ENCODE measurements at regions of chr10 and their contacts with region 1.

Region 1: DNA sequence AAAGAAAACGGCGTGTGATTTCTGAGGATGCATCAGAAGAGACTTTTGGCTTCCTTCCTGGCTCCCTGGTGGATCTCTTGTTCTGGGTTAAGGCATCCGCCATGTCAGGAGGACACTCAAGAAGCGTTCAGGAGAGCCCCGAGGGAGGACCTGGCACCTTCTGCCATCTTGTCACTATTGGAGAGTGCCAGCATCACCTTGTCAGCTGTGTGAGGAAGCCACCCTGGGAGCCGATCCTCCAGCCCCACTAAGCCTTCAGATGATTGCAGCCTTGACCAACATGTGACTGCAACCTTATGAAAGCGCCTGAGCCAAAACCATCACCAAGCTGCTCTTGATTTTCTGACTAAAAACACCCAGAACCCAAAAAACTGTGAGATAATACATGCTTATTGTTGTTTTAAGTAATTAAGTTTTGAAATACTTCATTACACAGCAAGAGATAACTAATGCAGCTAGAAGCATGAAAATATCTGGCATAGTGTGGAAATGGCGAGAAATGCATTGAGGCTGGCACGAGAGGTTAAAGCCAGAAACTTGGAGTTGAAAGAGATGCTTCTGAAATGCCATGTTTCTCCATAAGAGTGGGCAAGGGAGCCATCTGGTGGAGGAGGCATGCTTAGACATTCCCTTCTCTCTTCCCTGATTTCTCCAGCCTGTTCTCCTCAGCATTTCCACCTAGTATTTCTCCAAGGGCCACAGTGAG is 5.4 kb upstream of the ZFYVE27 start:
- DNase-seq: peak; percentile 63 to 79
- H3K4me3 ChIP-seq: no peak overlapping the region
- H3K4me3 Mint-ChIP-seq: no peak overlapping the region
- H3K27ac Mint-ChIP-seq: no peak overlapping the region
- H3K4me1 ChIP-seq: peaks cover 1% of the 10 kb centered on the region; the same call in 1 of the 2 replicates
- H3K4me1 Mint-ChIP-seq: peaks cover 12% of the 10 kb centered on the region
- H3K27me3 ChIP-seq: no peaks in the 10 kb centered on the region
- H3K27me3 Mint-ChIP-seq: no peaks in the 10 kb centered on the region
- CTCF ChIP-seq: peak; percentile 81 to 88

Region 2: GRCh38 chr10:97676770-97677581 is 54.5 kb before region 1 on chr10:
- CTCF ChIA-PET with region 1: interaction called, 7 read pairs
- POLR2A ChIA-PET with region 1: interaction called, 4 read pairs
- intact Hi-C with region 1: loop called (anchors 1 kb)
- DNase-seq: peak in 1 of 2 experiments; percentile 54
- H3K4me3 ChIP-seq: no peak overlapping the region
- H3K4me3 Mint-ChIP-seq: no peak overlapping the region
- H3K27ac Mint-ChIP-seq: peak overlapping the region; percentile 57
- H3K4me1 ChIP-seq: peaks cover 5% of the 10 kb centered on the region
- H3K4me1 Mint-ChIP-seq: peaks cover 2% of the 10 kb centered on the region
- H3K27me3 ChIP-seq: no peaks in the 10 kb centered on the region
- H3K27me3 Mint-ChIP-seq: no peaks in the 10 kb centered on the region
- CTCF ChIP-seq: peak; percentile 82 to 87

Region 3: DNA sequence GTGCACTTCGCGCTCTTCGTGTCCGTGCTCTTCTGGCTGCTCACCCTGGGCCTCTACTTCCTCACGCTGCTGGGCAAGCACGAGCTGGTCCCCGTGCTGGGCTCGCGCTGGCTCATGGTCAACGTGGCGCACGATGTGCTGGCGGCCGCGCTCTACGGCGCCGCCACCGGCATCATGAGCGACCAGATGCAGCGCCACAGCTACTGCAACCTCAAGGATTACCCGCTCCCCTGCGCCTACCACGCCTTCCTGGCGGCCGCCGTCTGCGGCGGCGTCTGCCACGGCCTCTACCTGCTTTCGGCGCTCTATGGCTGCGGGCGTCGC is 17.5 kb before region 1 on chr10:
- CTCF ChIA-PET with region 1: interaction called, 12 read pairs
- POLR2A ChIA-PET with region 1: interaction called, 16 read pairs
- intact Hi-C with region 1: loop called (anchors 1 kb)
- DNase-seq: peak; percentile 74 to 81
- H3K4me3 ChIP-seq: peak overlapping the region; percentile 89
- H3K4me3 Mint-ChIP-seq: peak overlapping the region; percentile 92
- H3K27ac Mint-ChIP-seq: peak overlapping the region; percentile 91
- H3K4me1 ChIP-seq: peaks cover 21% of the 10 kb centered on the region
- H3K4me1 Mint-ChIP-seq: peaks cover 19% of the 10 kb centered on the region
- H3K27me3 ChIP-seq: no peaks in the 10 kb centered on the region
- H3K27me3 Mint-ChIP-seq: no peaks in the 10 kb centered on the region
- CTCF ChIP-seq: peak in 1 of 2 experiments; percentile 49

Measured in Caco-2 (cell line).